GM10248 (cell line): ENCODE measurements at regions of chr7 and their contacts with region 1.

Region 1: DNA sequence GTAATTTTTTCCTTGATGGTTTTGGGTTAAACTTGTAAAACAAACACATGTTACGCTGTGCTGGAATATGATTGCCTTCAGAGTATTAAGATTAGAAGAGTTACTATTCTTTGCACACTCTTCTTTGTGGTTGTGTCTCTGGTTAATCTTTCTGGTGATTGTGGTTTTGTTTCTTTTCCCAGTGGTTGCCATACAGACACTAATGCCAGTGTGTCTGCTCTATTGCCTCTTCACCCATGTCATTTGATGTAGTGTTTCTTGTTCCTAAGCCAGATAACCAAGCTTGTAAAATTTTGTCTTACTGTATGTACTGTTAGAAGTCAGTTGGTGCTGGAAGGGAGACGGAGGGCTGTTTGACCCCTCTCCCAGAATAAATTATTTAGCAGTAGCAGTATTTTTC is 124.8 kb downstream of the PHTF2 start:
- DNase-seq: no peak
- CTCF ChIP-seq: no peak

Region 2: DNA sequence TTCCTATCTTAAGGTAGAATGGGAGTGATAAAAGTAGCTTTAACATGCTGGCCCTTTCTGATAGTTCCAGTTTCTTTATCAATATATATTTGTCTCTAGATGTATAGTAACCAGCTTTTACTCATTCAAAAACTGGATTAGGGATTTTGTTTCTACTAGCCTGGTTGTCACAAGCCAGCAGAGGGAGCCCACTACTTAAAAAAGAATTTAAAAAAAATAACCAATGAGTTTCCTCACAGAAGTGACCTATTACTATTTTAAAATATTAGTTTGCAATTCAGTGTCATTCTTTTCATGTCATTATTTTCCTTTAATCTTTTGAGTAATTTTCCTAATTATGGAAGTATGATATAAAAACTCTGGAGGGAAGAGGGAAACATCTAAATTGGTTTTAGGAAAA is 17.2 kb after region 1 on chr7:
- CTCF ChIA-PET with region 1: interaction called, 14 read pairs
- POLR2A ChIA-PET with region 1: no interaction called
- DNase-seq: peak; percentile 36
- CTCF ChIP-seq: peak; percentile 32

Region 3: DNA sequence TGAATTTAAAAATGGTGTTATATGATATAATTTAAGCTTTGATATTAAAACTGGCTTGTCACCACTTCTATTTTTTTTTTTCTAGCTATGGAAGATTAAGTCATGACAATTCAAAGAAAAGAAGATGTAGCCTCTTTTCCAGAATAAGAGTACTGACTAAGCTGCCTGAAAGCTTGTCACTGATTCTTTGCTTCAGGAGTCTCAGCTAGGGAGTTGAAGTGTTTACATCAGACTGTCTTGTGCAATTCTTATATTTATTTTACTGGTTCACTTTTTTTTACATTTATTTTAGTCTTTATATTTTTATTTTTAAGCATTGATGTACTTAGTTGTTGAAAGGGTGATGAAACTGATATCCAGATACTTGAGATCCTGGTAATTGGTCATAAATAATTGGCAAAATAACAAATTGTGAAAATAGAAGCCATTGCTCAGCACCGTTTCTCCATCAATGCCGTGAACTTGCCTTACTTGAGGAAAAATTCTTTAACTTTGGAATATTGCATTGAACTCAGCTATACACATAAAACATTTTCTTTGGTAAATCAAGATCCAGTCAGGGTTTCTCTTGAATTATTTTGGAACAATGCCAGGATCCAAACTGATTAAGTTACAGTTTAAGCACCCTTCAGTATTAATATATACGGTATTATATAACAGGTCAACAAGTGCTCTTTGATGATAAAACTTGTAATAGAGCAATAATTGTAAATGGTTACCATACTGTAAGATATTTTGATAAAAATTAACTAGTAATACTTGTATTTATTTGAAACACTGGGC is 31.5 kb after region 1 on chr7:
- CTCF ChIA-PET with region 1: no interaction called
- POLR2A ChIA-PET with region 1: no interaction called
- DNase-seq: no peak
- CTCF ChIP-seq: no peak